Right cardiac atrium (tissue), 5 donors: ENCODE measurements at regions of chr20 and their contacts with region 1.

Region 1: GRCh38 chr20:31859998-31860709 is 10.2 kb downstream of the DUSP15 start:
- DNase-seq: peak in 2 of 3 donors; percentile 63 to 72
- ATAC-seq: peak; percentile 56 to 83
- H3K4me3 ChIP-seq: no peak overlapping the region
- H3K27ac ChIP-seq: no peak overlapping the region
- H3K4me1 ChIP-seq: no peaks in the 10 kb centered on the region
- H3K27me3 ChIP-seq: no peaks in the 10 kb centered on the region

Region 2: DNA sequence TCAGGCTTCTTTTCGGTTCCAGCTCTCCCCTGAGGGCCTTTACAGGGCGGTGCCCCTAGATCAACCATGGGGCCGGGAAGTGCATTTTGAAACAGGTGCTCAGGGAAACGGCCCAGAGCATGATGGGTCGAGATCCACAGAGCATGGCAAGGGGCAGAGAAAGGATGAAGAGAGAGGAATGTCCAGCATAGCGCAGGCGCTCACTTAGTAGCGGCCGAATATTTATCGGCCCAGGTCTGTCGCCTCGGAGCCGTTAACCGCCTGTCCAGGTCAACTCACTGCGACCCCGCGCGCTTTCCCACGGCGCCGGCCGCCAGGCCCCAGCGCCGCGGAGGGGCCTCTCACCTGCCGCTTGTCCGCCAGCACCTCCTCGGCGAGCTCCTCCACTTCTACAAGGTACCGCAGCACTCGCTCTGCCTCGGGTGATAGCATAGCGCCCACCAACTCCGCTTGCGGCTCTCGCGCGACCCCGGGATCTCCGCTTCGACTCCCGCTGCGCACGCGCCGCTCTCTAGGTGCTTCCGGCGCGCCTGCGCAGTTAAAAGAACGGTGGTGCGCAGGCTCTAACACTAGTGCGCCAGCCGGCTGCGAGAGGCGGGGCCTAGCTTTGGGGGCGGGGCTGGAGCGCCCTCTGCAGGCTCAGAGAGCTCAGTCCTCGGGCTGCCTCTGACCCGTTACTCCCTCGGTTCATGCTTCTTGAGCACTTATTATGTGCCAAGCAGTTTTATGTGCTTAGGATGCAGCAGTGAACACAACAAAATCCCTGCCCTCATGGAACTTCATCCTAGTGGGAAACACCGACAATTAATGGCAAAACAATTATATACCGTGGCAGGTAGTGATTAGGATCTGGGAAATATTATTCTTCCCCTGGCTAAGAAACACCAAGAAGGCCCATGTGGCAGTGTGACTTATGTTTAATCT is 91.6 kb after region 1 on chr20 and contains the start of gene PDRG1:
- intact Hi-C with region 1: loop called in 1 of 4 experiments (anchors 10 kb)
- DNase-seq: peak; percentile 96 to 99 (median 99)
- ATAC-seq: peak; percentile 97
- H3K4me3 ChIP-seq: peak within 1 kb of the TSS; percentile 85
- H3K27ac ChIP-seq: peak within 1 kb of the TSS; percentile 55
- H3K4me1 ChIP-seq: peaks cover 6% of the 10 kb centered on the region
- H3K27me3 ChIP-seq: no peaks in the 10 kb centered on the region
- total RNA-seq, gene PDRG1: 7.4 to 8.8 (median 8.6) TPM

Region 3: DNA sequence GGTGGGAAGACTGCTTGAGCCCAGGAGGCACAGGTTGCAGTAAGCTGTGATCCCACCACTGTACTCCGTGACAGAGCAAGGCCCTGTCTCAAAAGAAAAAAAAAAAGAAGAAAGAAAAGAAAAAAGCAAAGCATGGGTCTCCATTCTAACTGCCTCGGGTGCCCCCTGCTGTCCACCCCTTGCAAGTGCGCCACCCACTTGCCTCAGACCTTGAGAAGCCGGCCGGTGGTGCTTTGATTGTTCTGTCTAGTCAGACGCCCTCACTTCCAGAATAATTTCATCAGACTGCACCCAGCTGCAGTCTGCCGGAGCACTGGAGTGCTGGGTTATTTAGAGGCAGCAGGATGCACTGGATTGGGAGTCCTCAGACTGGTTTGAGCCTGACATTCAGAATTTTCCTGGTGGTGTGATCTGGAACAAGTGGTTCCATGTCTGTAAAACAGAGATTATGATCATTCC is 231.8 kb after region 1 on chr20:
- intact Hi-C with region 1: loop called in 1 of 4 experiments (anchors 10 kb)
- DNase-seq: peak; percentile 71 to 89 (median 87)
- ATAC-seq: peak; percentile 60 to 81
- H3K4me3 ChIP-seq: no peak overlapping the region
- H3K27ac ChIP-seq: no peak overlapping the region
- H3K4me1 ChIP-seq: no peaks in the 10 kb centered on the region
- H3K27me3 ChIP-seq: no peaks in the 10 kb centered on the region

Region 4: GRCh38 chr20:32204205-32205085 is 344.3 kb after region 1 on chr20:
- intact Hi-C with region 1: no loop called
- DNase-seq: no peak
- ATAC-seq: peak in 1 of 2 donors; percentile 7
- H3K4me3 ChIP-seq: no peak overlapping the region
- H3K27ac ChIP-seq: peak overlapping the region; percentile 95
- H3K4me1 ChIP-seq: peaks cover 21% of the 10 kb centered on the region
- H3K27me3 ChIP-seq: no peaks in the 10 kb centered on the region